ENCODE measurements at regions of chr2 and their contacts with region 1.

Region 1: DNA sequence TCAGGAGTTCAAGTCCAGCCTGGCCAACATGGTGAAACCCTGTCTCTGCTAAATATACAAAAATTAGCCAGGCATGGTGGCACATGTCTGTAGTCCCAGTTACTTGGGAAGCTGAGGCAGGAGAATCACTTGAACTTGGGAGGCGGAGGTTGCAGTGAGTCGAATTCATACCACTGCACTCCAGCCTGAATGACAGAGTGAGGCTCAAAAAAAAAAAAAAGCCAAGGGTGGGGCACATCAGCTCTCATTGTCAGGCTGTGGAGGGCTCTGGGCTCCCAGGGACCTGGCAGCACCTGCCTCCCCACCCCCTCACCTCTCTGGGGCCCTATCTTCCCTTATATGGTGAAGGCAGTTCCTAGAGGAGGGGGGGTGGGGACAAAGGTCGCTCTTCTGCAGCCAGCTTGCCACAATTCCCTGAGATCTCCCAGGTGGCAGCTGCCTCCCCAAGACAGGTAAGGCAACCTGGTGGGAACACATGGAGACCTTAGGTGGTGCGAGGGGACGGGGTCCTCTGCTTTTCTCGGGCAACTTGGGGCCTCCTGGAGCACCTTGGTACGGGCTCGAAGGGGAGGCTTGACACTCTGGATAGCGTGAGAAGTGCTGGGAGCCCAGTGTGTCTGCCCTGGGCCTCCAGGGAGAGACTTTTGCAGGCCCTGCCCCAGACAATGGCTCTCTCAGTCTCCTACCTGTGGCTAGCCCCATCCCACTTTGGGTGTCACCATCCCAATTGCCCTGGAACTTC is at the start of gene VIL1:
- DNase-seq: no peak
- H3K4me3 ChIP-seq: no peak within 1 kb of the TSS
- H3K27ac ChIP-seq: no peak within 1 kb of the TSS
- H3K4me1 ChIP-seq: no peaks in the 10 kb centered on the region
- H3K27me3 ChIP-seq: no peaks in the 10 kb centered on the region
- CTCF ChIP-seq: no peak
- POLR2A ChIP-seq: no peak
- total RNA-seq, gene VIL1: not detected in 2 replicates

Region 2: GRCh38 chr2:218500501-218501060 is 81.7 kb after region 1 on chr2:
- CTCF ChIA-PET with region 1: interaction called, 3 read pairs
- POLR2A ChIA-PET with region 1: no interaction called
- dilution Hi-C with region 1: no loop called
- intact Hi-C with region 1: loop called (anchors 1 kb)
- DNase-seq: no peak
- H3K4me3 ChIP-seq: no peak overlapping the region
- H3K27ac ChIP-seq: no peak overlapping the region
- H3K4me1 ChIP-seq: peaks cover 11% of the 10 kb centered on the region
- H3K27me3 ChIP-seq: no peaks in the 10 kb centered on the region
- CTCF ChIP-seq: no peak
- POLR2A ChIP-seq: no peak

Measured in endothelial cell of umbilical vein (primary cell).